ENCODE measurements at regions of chr3 and their contacts with region 1.

Region 1: DNA sequence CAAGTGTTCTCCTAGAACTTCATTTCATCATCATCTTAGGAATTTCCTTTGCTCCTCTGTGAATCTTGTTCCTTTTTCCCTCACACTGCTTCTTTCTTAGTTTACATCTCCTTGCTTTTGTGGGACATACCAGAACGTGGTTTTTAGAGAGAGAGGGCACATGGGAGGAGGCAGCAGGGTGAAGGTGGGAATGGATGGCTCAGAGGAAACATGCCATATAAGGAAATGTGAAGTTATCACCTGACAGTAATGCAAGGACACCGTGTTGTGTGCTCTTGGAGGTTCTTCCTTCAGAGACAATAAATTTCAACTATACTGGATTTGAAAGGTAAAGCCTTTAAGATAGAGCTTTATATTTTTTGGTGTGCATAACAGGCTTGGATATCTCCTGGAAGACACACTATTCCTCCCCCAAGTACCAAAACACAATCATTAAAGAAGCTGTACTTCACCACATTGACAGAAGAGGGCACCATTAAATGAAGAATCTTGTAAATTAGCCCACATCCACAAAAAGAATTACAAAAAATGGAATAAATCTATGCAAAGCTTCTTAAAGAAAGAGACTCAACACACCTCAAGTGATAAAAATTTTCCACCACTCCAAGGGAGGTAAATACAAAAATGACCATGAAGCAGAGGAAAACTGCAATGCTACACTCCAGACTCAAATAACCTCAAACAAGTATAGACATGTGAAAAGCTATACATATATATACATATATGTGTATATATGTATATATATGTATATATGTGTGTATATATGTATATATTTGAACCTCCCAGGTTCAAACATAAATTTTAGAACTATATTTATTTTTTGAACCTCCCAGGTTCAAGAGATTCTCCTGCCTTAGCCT is 26.1 kb downstream of the RPL39L start:
- DNase-seq: no peak
- ATAC-seq: no peak
- H3K4me3 Mint-ChIP-seq: no peak overlapping the region
- H3K27ac Mint-ChIP-seq: no peak overlapping the region
- H3K4me1 Mint-ChIP-seq: peaks cover 9% of the 10 kb centered on the region
- H3K27me3 Mint-ChIP-seq: no peaks in the 10 kb centered on the region

Region 2: DNA sequence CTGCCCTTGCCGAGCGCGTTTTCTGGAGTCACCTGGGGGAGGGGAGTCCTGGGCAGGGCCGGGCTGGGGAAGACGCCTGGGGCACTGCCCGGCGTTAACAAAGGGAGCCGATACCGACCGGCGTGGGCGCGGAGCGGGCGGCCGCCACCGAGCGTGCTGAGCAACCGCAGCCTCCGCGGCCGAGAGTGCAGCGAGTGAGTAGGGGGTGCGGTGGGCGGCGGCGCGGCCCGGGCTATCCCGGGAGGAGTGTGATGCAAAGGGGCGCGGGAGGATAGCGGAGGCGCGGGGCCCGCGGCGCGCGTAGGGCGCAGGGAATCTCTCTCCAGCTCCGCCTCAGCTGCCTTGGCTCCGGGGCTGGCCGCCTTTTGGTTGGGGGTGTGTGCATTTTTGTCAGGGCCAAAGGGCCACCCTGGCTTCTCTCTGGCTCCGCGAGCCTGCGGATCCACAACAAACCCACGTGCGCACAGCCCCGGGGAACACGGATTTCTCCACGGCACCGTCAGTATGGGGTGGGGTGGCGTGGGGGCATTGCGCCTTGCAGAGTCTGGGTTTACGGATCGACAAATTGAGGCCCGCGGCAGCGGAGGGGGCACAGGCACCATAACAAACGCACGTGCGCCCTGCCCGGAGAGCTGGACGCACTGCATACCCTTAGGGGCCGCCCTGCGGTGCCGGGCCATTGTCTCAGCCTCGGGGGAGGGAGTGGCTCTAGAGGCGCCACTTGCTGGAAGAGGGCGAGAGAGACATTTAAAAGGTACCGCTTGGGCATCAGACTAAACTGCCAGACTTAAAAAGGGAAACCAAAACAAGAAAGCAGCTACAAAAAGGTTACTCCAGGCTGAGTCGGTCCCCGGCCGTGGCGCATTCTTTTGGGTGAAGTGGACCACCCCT is 182.3 kb before region 1 on chr3:
- CTCF ChIA-PET with region 1: interaction called, 12 read pairs
- POLR2A ChIA-PET with region 1: no interaction called
- DNase-seq: peak; percentile 78
- ATAC-seq: peak; percentile 80
- H3K4me3 Mint-ChIP-seq: peak overlapping the region; percentile 99
- H3K27ac Mint-ChIP-seq: peak overlapping the region; percentile 87
- H3K4me1 Mint-ChIP-seq: peaks cover 28% of the 10 kb centered on the region
- H3K27me3 Mint-ChIP-seq: no peaks in the 10 kb centered on the region

Region 3: GRCh38 chr3:187125319-187126031 is 12.3 kb after region 1 on chr3:
- CTCF ChIA-PET with region 1: interaction called, 21 read pairs
- POLR2A ChIA-PET with region 1: no interaction called
- DNase-seq: no peak
- ATAC-seq: no peak
- H3K4me3 Mint-ChIP-seq: no peak overlapping the region
- H3K27ac Mint-ChIP-seq: no peak overlapping the region
- H3K4me1 Mint-ChIP-seq: peaks cover 21% of the 10 kb centered on the region
- H3K27me3 Mint-ChIP-seq: no peaks in the 10 kb centered on the region

Region 4: DNA sequence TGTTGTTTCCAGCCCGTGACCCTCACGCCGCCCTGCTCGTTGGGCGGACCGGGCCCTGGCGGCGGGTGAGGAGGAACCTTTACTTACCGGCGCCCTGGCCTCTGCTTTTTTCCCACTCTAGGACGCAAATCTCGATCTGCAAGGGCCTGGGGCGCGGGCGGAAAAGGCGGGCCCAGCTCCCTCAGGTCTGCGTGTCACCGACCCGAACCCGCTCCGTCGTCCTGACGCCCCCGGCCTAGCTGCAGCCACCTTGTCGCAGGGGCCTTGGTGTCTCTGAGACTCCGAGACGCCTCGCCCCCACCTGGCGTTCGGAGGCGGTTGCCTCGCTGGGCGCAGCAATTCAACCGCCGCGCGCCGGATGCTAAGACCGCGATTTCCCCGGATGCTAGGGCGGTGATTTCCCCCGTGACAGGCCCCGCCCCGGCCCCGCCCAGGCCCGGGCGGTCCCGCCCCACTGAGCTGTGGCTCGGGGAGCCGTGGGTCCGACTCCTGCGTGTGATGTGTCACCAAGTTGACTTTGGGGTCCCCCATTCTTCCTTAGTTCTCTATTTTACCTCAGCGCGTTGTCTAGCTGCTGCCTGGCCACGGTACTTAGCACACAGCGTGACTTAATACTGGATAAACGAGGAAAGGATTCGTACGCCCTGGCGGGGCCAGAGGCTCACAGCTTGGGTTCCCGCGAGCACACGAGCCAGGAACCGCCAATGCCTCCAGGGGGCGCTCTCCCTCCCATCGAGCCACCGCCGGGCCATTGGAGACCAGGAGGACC is 26.1 kb after region 1 on chr3 and contains the start of gene RPL39L:
- CTCF ChIA-PET with region 1: interaction called, 100 read pairs
- POLR2A ChIA-PET with region 1: interaction called, 6 read pairs
- DNase-seq: peak; percentile 96
- ATAC-seq: peak; percentile 98
- H3K4me3 Mint-ChIP-seq: peak within 1 kb of the TSS; percentile 91
- H3K27ac Mint-ChIP-seq: peak within 1 kb of the TSS; percentile 98
- H3K4me1 Mint-ChIP-seq: peaks cover 24% of the 10 kb centered on the region
- H3K27me3 Mint-ChIP-seq: no peaks in the 10 kb centered on the region
- total RNA-seq, gene RPL39L: 21.1 to 23.5 TPM

Region 5: DNA sequence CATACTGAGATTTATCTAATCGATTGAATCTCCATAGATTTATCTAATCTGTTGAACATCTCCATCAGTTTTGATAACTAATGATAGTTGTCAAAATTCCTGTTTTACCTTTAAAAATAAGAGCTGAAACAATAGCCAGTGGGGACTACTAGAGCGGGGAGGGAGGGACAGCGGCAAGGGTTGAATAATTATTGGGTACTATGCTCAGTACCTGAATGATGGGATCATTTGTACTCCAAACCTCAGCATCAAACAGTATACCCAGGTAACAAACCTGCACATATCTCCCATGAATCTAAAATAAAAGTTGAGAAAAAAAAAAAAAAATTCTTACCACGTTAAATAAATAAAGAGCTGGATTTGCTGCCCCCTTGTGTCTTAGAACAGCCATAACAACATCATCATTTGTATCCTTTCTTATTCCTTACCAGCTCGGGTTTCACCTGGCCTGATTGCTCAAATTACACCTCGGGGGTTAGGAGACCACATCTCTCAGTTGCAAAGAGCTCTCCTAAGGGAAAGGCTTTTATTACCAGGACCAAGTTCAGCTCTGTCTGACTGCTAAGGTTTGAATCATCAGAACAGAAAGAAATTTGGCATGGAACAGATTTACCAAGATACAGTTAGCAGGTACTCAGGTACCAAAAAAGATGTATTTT is 51.9 kb after region 1 on chr3:
- CTCF ChIA-PET with region 1: interaction called, 176 read pairs
- POLR2A ChIA-PET with region 1: no interaction called
- DNase-seq: peak; percentile 63
- ATAC-seq: peak; percentile 47
- H3K4me3 Mint-ChIP-seq: no peak overlapping the region
- H3K27ac Mint-ChIP-seq: no peak overlapping the region
- H3K4me1 Mint-ChIP-seq: peaks cover 4% of the 10 kb centered on the region
- H3K27me3 Mint-ChIP-seq: peaks cover 36% of the 10 kb centered on the region